ENCODE measurements at regions of chr11 and their contacts with region 1.

Region 1: GRCh38 chr11:92383430-92383829 is 158.8 kb downstream of the FAT3 start:
- DNase-seq: no peak
- H3K4me3 ChIP-seq: no peak overlapping the region
- H3K27ac ChIP-seq: no peak overlapping the region
- H3K4me1 ChIP-seq: peaks cover 3% of the 10 kb centered on the region
- H3K27me3 ChIP-seq: no peaks in the 10 kb centered on the region
- CTCF ChIP-seq: no peak
- POLR2A ChIP-seq: no peak

Region 2: GRCh38 chr11:92224407-92225124 is 158.9 kb before region 1 on chr11 and contains the start of gene FAT3:
- CTCF ChIA-PET with region 1: no interaction called
- POLR2A ChIA-PET with region 1: no interaction called
- dilution Hi-C with region 1: no loop called
- intact Hi-C with region 1: loop called (anchors 10 kb)
- DNase-seq: peak; percentile 10
- H3K4me3 ChIP-seq: no peak within 1 kb of the TSS
- H3K27ac ChIP-seq: no peak within 1 kb of the TSS
- H3K4me1 ChIP-seq: no peaks in the 10 kb centered on the region
- H3K27me3 ChIP-seq: peaks cover 30 to 55% of the 10 kb centered on the region in 2 experiments
- CTCF ChIP-seq: no peak
- POLR2A ChIP-seq: no peak
- total RNA-seq, gene FAT3: 0.05 and 1.4 TPM in 2 replicates

Region 3: DNA sequence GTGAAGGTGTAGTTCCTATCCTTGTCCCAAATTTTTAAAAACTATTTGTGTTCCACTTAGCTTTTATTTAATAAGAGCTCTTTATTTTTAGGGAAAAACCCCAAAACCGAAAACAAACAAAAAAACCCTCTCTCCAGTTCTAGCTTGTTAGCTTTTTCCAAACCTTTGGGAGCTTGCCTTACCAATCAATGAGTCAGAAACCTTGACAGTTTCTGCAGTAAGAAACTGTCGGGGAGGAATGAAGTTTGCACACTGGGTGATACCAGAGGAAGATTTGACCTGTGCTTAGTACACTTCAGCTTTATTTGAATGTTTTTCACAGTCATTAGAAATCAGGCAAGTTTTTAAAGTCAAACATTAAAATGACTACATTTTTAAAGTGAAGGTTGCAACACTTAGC is 53.8 kb before region 1 on chr11:
- CTCF ChIA-PET with region 1: no interaction called
- POLR2A ChIA-PET with region 1: no interaction called
- dilution Hi-C with region 1: no loop called
- intact Hi-C with region 1: no loop called
- DNase-seq: no peak
- H3K4me3 ChIP-seq: no peak overlapping the region
- H3K27ac ChIP-seq: no peak overlapping the region
- H3K4me1 ChIP-seq: no peaks in the 10 kb centered on the region
- H3K27me3 ChIP-seq: no peaks in the 10 kb centered on the region
- CTCF ChIP-seq: no peak
- POLR2A ChIP-seq: no peak

Measured in endothelial cell of umbilical vein (primary cell).